Activated T-helper 1 cell treated with anti-CD3 and anti-CD28 coated beads, Interleukin-12 subunit alpha, Interleukin-12 subunit beta, Interleukin-2, Interleukin-4 antibody, amounts not matched to agents 30 ng/mL and 10 ng/mL and 1 ng/mL, durations not matched to agents 14 hours and 24 hours and 36 hours (primary cell): ENCODE measurements at regions of chr2 and their contacts with region 1.

Region 1: DNA sequence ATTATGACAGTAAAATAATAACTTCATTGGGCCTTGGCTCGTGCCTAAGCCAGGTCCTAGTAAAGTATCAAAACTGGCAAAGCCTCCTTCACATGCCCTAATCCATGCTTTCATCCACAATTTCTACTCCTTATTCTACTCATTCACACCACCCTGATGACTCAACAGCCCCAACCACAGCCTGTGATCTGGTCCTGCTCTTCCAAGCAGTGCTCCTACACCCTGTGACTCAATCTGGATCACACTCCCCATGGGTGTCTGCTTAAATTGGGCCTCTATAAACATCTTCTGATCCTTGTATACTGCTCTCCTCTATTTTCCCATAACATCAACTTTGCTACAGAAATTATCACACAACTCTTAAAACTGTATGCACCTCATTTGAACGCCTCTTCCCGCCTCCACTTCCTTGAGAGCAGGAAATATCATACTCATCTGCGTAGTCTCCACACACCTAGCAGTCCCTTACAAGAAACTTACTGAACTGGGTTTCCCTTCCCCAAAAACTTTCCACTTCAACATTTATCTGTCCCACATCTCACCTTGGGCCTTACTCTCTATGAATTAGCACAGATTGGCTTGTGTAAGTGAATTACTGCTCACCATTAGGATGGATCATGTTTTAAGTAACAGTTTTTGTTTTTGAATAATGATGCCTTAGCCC is 15.9 kb downstream of the GTF3C3 start:
- DNase-seq: no peak
- H3K4me3 Mint-ChIP-seq: peak overlapping the region; percentile 12
- H3K27ac Mint-ChIP-seq: peak overlapping the region; percentile 80
- H3K4me1 Mint-ChIP-seq: peaks cover 22% of the 10 kb centered on the region
- H3K27me3 Mint-ChIP-seq: no peaks in the 10 kb centered on the region

Region 2: DNA sequence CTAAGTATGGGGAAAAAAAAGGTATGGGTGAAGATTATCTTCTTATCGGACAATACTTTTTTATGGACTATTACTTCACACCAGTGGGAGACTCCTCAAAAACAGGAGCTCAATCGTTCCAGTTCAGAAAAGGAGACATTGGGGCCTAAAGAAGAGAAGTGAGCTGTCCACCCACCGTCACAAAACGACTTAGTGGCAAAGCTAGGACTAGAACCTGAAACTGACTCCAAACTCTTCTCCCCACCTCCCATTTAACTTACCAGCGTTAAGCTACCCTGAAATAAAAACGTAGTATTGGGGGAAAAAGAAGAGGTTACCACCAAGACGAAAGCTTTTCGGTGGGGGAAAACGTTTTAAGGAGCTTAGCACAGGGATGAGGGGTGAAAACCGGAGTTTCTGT is 15.4 kb after region 1 on chr2:
- intact Hi-C with region 1: loop called (anchors 1 kb)
- DNase-seq: no peak
- H3K4me3 Mint-ChIP-seq: peak overlapping the region; percentile 96
- H3K27ac Mint-ChIP-seq: peak overlapping the region; percentile 93
- H3K4me1 Mint-ChIP-seq: peaks cover 31% of the 10 kb centered on the region
- H3K27me3 Mint-ChIP-seq: peaks cover 2% of the 10 kb centered on the region

Region 3: DNA sequence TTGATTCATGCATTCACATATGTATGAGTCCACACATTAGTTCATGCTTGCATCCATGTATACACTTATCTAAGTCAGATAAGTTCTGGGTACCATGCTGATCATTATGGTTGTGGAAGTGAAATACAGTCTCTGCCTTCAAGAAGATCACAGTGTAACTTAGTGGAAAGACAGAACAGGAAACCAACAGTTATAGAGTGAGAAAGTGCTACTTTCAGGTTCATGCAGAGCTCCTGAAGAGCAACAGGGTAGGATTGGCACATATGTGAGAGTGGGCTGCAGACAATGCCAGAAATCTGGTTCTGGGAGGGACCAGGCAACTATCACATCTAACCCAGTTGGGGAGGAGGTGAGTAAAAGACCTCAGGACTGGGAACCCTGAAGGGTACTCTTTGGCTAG is 178.3 kb after region 1 on chr2:
- intact Hi-C with region 1: loop called (anchors 1 kb)
- DNase-seq: no peak
- H3K4me3 Mint-ChIP-seq: peak overlapping the region; percentile 13
- H3K27ac Mint-ChIP-seq: peak overlapping the region; percentile 57
- H3K4me1 Mint-ChIP-seq: peaks cover 40% of the 10 kb centered on the region
- H3K27me3 Mint-ChIP-seq: no peaks in the 10 kb centered on the region

Region 4: DNA sequence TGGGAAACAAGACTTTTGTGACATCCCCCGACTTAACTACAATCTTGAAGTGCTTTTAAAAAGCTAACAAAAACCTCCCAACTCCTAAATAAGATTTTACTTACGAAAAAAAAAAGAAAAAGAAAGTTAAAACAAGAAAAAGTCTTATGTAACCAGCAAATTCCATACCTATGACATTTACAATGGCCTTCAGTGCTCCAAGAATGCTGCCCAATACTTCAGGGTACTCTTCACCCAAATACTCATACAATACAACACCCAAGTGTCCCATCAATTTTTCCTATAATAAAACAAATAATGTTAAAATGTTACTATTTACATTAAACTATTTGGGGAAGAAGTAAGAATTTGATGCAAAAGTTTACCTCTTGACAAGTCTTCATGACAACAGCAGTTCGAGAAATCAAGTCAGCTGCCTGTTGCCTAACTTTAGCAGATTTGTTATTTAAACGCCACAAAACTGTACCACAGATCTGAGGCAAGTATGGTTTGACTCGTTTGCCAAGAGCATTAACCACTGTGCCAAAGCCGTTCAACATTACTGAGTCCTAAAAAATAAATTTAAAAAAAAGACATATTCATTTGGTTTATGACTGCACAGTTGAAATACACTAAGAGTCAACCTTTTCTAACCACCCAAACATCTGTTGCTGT is 616.5 kb after region 1 on chr2:
- intact Hi-C with region 1: loop called (anchors 10 kb)
- DNase-seq: no peak
- H3K4me3 Mint-ChIP-seq: no peak overlapping the region
- H3K27ac Mint-ChIP-seq: no peak overlapping the region
- H3K4me1 Mint-ChIP-seq: no peaks in the 10 kb centered on the region
- H3K27me3 Mint-ChIP-seq: no peaks in the 10 kb centered on the region

Region 5: GRCh38 chr2:198053776-198054698 is 1270.5 kb after region 1 on chr2:
- intact Hi-C with region 1: no loop called
- DNase-seq: peak; percentile 10
- H3K4me3 Mint-ChIP-seq: no peak overlapping the region
- H3K27ac Mint-ChIP-seq: no peak overlapping the region
- H3K4me1 Mint-ChIP-seq: no peaks in the 10 kb centered on the region
- H3K27me3 Mint-ChIP-seq: peaks cover 3% of the 10 kb centered on the region